Endothelial cell of umbilical vein (primary cell): ENCODE measurements at regions of chr1 and their contacts with region 1.

Region 1: DNA sequence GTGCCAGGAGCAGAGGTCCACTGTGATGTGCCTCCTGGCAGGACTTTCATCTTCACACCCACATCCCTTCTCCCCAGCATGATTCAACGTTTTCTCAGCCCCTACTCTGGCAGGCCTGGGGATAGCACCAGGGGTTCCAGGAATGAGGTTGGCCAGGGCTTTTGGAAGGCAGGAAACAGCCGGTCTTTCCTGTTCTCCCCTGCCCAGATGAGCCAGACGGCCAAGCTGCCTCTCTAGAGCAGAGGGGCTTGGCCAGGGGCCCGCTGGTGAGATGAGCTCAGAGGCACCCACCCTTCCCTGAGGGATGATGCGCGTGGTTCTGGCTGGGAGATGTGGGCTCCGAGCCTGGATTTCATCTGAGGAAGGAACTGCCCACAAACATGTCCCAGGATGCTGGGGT is 4.3 kb upstream of the MFAP2 start:
- DNase-seq: peak; percentile 93
- H3K4me3 ChIP-seq: no peak overlapping the region
- H3K27ac ChIP-seq: peak overlapping the region; percentile 26
- H3K4me1 ChIP-seq: peaks cover 16% of the 10 kb centered on the region
- H3K27me3 ChIP-seq: no peaks in the 10 kb centered on the region
- CTCF ChIP-seq: no peak
- POLR2A ChIP-seq: no peak

Region 2: GRCh38 chr1:16260814-16261213 is 723.9 kb before region 1 on chr1:
- CTCF ChIA-PET with region 1: no interaction called
- POLR2A ChIA-PET with region 1: no interaction called
- dilution Hi-C with region 1: no loop called
- intact Hi-C with region 1: no loop called
- DNase-seq: no peak
- H3K4me3 ChIP-seq: no peak overlapping the region
- H3K27ac ChIP-seq: no peak overlapping the region
- H3K4me1 ChIP-seq: no peaks in the 10 kb centered on the region
- H3K27me3 ChIP-seq: no peaks in the 10 kb centered on the region
- CTCF ChIP-seq: no peak
- POLR2A ChIP-seq: no peak

Region 3: DNA sequence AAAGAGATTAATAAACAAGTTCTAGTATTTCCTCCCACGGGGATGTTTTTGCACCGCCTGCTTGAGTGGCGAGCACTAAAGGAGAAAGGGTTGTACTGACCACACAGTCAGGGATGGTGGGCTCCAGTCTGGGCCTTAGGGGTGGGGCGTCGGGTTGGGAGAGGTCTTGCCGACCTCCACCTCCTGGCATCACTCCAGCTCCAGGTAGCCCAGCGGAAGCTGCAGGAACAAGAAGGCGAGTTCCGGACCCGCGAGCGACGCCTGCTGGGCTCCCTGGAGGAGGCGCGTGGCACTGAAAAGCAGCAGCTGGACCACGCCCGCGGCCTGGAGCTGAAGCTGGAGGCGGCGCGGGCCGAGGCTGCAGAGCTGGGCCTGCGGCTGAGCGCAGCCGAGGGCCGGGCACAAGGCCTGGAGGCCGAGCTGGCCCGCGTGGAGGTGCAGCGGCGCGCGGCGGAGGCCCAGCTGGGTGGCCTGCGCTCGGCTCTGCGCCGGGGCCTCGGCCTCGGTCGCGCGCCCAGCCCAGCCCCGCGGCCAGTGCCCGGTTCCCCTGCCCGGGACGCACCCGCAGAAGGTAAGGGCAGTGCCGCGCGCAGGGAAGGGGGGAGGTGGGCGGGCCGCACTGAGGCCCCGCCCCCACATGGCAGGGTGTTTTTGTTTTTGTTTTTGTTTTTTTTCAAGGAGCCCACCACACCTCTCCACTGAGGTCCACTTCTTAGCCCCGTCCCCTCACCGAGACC is 24.0 kb before region 1 on chr1:
- CTCF ChIA-PET with region 1: interaction called, 16 read pairs
- POLR2A ChIA-PET with region 1: interaction called, 5 read pairs
- dilution Hi-C with region 1: no loop called
- intact Hi-C with region 1: loop called (anchors 1 kb)
- DNase-seq: peak; percentile 69
- H3K4me3 ChIP-seq: peak overlapping the region in 2 of 3 experiments; percentile 18 to 27
- H3K27ac ChIP-seq: no peak overlapping the region
- H3K4me1 ChIP-seq: no peaks in the 10 kb centered on the region
- H3K27me3 ChIP-seq: no peaks in the 10 kb centered on the region
- CTCF ChIP-seq: peak; percentile 77 to 85
- POLR2A ChIP-seq: peak; percentile 64

Region 4: DNA sequence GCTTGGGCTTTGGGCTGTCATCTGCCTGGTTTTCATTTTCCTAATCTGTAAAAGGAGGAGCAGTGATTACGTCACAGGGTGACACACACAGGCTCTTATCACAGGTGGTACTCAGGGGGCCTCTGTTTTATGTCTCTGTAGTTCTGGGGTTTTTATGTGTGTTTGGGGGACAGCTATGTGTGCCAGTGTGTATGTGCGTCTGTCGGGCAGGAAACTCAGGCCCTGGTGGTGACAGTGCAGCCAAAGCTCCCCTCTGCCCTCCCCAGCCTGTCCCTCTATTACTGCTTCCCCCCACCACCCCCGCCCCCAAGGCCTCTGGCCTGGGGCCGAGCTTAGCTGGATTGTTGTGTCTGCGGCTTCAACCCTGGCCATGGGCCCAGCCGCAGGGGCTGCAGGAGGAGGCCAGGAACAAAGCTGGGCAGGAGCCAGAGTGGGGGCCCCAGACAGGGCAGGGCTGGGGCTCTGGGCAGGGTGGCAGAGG is 17.6 kb before region 1 on chr1:
- CTCF ChIA-PET with region 1: interaction called, 25 read pairs
- POLR2A ChIA-PET with region 1: interaction called, 8 read pairs
- dilution Hi-C with region 1: no loop called
- intact Hi-C with region 1: loop called (anchors 1 kb)
- DNase-seq: peak; percentile 89
- H3K4me3 ChIP-seq: no peak overlapping the region
- H3K27ac ChIP-seq: peak overlapping the region; percentile 57
- H3K4me1 ChIP-seq: peaks cover 11% of the 10 kb centered on the region
- H3K27me3 ChIP-seq: no peaks in the 10 kb centered on the region
- CTCF ChIP-seq: no peak
- POLR2A ChIP-seq: no peak

Region 5: DNA sequence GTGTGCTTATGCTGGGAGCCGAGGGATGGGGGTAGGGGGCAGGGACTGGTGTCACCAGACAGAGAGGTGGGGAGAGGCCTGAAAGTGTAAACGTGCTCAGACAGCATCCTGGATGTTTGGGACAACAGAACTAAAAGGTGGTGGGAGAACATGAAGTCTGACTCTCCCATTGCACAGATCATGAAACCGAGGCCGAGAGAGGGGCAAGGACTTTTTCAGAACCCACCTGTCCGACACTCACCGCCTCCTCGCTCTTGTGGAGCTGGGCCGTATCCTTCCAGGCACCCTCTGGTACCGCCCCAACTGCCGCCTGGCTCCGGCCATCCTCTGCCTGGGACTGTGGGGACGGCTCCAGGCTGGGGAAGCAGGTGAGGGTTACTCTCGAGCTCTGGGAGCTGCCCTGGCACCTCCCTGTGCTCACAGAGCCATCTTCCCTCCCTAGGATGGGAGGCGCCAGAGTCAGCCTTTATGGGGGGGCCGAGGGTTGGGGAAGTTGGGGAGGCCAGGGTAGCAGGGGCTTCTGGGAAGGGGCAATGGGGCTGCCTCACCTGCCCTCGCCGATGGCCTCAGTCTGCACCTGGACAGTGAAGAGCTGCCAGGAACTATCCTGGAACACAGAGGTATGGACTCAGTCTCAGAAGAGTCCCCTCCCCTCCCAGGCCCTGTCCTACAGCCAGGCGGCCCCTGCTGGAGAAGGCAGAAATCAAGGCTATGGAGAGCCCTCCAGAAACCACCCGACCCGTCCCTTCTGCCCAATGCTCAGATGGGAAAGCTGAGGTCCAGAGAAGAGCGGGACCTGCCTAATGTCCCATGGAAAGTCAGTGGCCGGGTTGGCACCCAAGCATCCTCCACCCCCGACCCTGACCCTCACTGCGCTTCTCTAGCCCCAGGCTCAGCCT is 20.0 kb after region 1 on chr1:
- CTCF ChIA-PET with region 1: interaction called, 20 read pairs
- POLR2A ChIA-PET with region 1: interaction called, 8 read pairs
- dilution Hi-C with region 1: no loop called
- intact Hi-C with region 1: no loop called
- DNase-seq: no peak
- H3K4me3 ChIP-seq: no peak overlapping the region
- H3K27ac ChIP-seq: no peak overlapping the region
- H3K4me1 ChIP-seq: peaks cover 3% of the 10 kb centered on the region
- H3K27me3 ChIP-seq: no peaks in the 10 kb centered on the region
- CTCF ChIP-seq: no peak
- POLR2A ChIP-seq: no peak

Region 6: GRCh38 chr1:17011439-17012307 is 27.0 kb after region 1 on chr1 and contains the start of gene ATP13A2:
- CTCF ChIA-PET with region 1: interaction called, 8 read pairs
- POLR2A ChIA-PET with region 1: no interaction called
- dilution Hi-C with region 1: no loop called
- intact Hi-C with region 1: loop called (anchors 2 kb)
- DNase-seq: peak; percentile 75
- H3K4me3 ChIP-seq: peak within 1 kb of the TSS; percentile 20 to 62 (median 59)
- H3K27ac ChIP-seq: no peak within 1 kb of the TSS
- H3K4me1 ChIP-seq: peaks cover 24% of the 10 kb centered on the region
- H3K27me3 ChIP-seq: no peaks in the 10 kb centered on the region
- CTCF ChIP-seq: no peak
- POLR2A ChIP-seq: no peak
- total RNA-seq, gene ATP13A2: 44.9 and 52.3 TPM in 2 replicates